Mammary epithelial cell (primary cell): ENCODE measurements at regions of chr7 and their contacts with region 1.

Region 1: DNA sequence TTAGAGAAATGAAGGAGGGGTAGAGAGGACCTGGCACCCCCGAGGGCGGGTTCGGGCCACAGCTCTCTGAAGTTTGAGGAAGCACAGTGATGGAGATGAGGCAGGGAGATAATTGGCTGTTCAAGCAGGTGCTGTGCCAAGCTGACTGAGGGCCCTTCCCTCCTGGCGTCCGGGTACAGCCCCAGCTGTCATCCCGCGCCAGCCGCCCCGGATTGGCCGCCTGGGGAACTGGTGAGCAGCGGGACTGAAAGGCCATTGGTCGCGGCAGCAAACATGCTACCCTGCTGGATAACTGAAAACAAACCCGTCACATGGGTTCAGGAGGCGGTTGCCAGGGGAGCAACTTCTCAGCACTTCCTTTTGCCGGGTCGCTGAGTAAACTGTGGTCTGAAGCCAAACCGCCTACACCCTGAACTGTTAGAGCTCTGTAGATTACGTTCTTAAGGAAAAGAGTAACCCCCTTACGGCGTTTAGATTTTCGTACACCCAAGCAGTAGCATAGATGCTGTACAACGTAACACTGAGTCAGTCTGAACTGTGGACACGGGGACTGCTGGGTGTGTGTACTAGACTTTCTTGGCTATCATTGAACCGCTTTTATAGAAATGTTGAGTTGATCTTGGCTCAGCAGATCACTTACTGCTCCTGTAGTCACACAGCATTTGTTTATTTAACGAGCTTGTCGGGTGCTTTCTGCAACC is 1.3 kb downstream of the INSIG1 start:
- DNase-seq: peak; percentile 97
- H3K4me3 ChIP-seq: peak overlapping the region; percentile 41 to 68 (median 59)
- H3K27ac ChIP-seq: peak overlapping the region; percentile 83
- H3K4me1 ChIP-seq: peaks cover 20% of the 10 kb centered on the region
- H3K27me3 ChIP-seq: no peaks in the 10 kb centered on the region
- CTCF ChIP-seq: no peak

Region 2: GRCh38 chr7:155003376-155004214 is 295.4 kb before region 1 on chr7:
- CTCF ChIA-PET with region 1: no interaction called
- dilution Hi-C with region 1: no loop called
- in situ Hi-C with region 1: no loop called
- intact Hi-C with region 1: loop called (anchors 2 kb)
- DNase-seq: peak; percentile 66
- H3K4me3 ChIP-seq: peak overlapping the region; percentile 93 to 99 (median 93)
- H3K27ac ChIP-seq: peak overlapping the region; percentile 78
- H3K4me1 ChIP-seq: no peaks in the 10 kb centered on the region
- H3K27me3 ChIP-seq: no peaks in the 10 kb centered on the region
- CTCF ChIP-seq: no peak

Region 3: GRCh38 chr7:155205368-155206317 is 93.3 kb before region 1 on chr7:
- CTCF ChIA-PET with region 1: no interaction called
- dilution Hi-C with region 1: no loop called
- in situ Hi-C with region 1: no loop called
- intact Hi-C with region 1: loop called (anchors 1 kb)
- DNase-seq: peak; percentile 95
- H3K4me3 ChIP-seq: no peak overlapping the region
- H3K27ac ChIP-seq: peak overlapping the region; percentile 49
- H3K4me1 ChIP-seq: peaks cover 11% of the 10 kb centered on the region
- H3K27me3 ChIP-seq: no peaks in the 10 kb centered on the region
- CTCF ChIP-seq: no peak

Region 4: DNA sequence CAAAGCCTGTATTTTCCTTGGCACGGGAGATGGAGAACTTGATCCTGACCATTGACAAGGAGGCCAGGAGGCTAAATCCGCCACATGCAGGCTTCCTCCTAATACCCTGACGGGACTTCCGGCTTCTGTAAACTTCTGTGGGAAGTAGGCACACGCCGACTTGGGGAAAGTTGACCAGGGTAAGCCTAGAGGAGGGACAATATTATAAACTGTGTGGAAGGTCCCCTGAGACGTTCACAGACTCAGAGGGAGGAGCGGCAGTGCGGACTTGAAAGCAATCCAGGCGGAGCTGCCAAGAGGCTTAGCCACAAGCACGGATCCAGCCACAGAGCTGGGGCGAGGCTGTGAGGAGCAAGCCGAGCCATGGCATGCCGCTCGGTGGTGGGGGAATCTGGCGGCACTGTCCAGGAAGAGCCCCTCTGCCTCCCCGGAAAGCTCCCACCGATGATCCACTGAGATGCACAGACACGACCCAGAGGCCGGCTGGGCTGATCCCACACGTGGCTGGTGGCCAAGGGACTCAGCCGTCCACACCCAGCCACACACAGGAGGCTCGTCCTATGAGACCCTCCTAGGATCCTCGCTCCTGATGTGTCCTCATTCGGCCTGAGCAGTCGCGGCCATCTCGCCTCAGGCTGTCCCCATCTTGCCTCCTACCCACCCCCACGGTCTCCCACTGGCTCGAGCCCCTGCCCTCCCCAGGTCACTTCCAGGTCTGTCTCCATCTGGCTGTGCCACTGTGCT is 41.3 kb before region 1 on chr7:
- CTCF ChIA-PET with region 1: no interaction called
- dilution Hi-C with region 1: no loop called
- in situ Hi-C with region 1: no loop called
- intact Hi-C with region 1: loop called (anchors 2 kb)
- DNase-seq: peak; percentile 69
- H3K4me3 ChIP-seq: no peak overlapping the region
- H3K27ac ChIP-seq: peak overlapping the region; percentile 43
- H3K4me1 ChIP-seq: peaks cover 14% of the 10 kb centered on the region
- H3K27me3 ChIP-seq: no peaks in the 10 kb centered on the region
- CTCF ChIP-seq: no peak

Region 5: GRCh38 chr7:155824227-155824886 is 525.4 kb after region 1 on chr7:
- CTCF ChIA-PET with region 1: no interaction called
- dilution Hi-C with region 1: no loop called
- in situ Hi-C with region 1: no loop called
- intact Hi-C with region 1: no loop called
- DNase-seq: no peak
- H3K4me3 ChIP-seq: no peak overlapping the region
- H3K27ac ChIP-seq: no peak overlapping the region
- H3K4me1 ChIP-seq: no peaks in the 10 kb centered on the region
- H3K27me3 ChIP-seq: no peaks in the 10 kb centered on the region
- CTCF ChIP-seq: no peak